BJ (cell line): ENCODE measurements at regions of chr4 and their contacts with region 1.

Region 1: GRCh38 chr4:77203380-77204197 is 46.6 kb downstream of the CCNG2 start:
- DNase-seq: peak; percentile 18
- H3K4me3 ChIP-seq: no peak overlapping the region
- H3K27me3 ChIP-seq: peaks cover 4% of the 10 kb centered on the region
- CTCF ChIP-seq: peak; percentile 81

Region 2: DNA sequence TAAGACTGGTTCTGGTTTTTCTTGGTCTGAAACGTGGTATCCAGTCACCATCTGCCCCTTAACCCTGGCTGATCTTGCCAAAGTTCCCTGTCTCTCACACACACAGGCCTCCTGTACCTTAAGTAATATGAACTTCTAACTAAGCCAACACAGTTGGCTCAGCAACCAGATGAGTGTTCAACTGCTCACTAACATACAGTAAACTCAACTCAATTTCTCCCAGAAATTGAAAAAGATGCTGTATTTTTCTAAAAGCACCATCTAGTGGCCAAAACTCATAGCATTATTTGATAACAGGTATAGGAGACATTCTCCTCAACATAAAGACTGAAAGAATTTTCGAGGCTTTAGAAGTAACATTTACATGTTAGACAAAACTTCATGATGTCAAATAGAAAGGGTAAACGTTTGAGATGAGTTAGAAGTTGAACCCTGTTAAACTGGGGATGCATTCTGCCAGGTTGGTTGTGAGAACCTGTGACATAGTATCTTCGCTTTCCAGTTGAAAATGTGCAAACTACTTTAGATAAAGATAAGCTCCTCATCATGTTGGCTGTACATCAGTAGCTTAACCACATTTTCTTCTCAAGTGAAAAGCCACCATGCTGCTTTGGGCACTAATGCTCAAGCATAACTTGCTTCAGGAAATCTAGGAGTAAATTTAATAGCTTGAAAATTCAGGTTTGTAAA is 159.0 kb before region 1 on chr4:
- CTCF ChIA-PET with region 1: interaction called, 17 read pairs
- POLR2A ChIA-PET with region 1: no interaction called
- DNase-seq: no peak
- H3K4me3 ChIP-seq: no peak overlapping the region
- H3K27me3 ChIP-seq: no peaks in the 10 kb centered on the region
- CTCF ChIP-seq: peak; percentile 62

Region 3: GRCh38 chr4:77052352-77052751 is 151.2 kb before region 1 on chr4:
- CTCF ChIA-PET with region 1: interaction called, 11 read pairs
- POLR2A ChIA-PET with region 1: interaction called, 11 read pairs
- DNase-seq: peak; percentile 42
- H3K4me3 ChIP-seq: no peak overlapping the region
- H3K27me3 ChIP-seq: no peaks in the 10 kb centered on the region
- CTCF ChIP-seq: peak; percentile 58

Region 4: GRCh38 chr4:77095101-77095821 is 108.3 kb before region 1 on chr4:
- CTCF ChIA-PET with region 1: interaction called, 120 read pairs
- POLR2A ChIA-PET with region 1: no interaction called
- DNase-seq: no peak
- H3K4me3 ChIP-seq: no peak overlapping the region
- H3K27me3 ChIP-seq: no peaks in the 10 kb centered on the region
- CTCF ChIP-seq: peak; percentile 95

Region 5: DNA sequence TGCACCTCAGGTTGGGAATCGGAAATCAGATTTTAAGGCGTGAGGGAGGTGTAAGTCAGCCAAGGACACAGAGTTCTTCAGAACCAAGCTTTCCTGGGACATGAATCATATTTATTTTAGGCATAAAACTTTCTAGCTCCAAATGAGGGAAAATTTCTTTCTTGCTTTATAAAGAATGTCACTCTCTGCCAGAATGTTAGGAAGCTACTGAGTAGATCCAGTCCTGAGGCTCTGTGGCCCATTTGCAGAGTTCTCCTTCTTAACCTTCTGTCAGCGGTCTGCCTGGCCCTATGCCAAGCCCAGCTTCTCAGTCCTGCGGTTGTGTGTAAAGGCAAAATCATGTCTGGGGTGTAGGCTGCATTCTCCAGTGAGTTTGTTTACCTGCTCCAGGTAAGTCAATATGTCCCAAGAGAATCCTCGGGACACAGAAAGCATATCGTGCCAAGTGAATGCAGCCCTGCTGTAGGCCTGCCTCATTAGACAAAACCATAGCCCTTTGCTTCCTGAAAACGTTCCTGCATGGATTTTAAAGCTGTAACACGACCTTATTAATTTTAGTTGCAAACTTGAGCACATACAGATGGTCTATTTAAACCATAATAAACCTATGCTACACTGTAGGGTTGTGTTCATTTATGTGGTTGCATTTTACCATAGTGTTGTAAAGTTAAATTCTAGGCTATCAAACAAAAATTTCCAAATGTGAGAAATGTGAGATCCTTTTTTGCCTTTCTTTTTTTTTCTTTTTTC is 98.6 kb before region 1 on chr4:
- CTCF ChIA-PET with region 1: interaction called, 120 read pairs
- POLR2A ChIA-PET with region 1: no interaction called
- DNase-seq: no peak
- H3K4me3 ChIP-seq: no peak overlapping the region
- H3K27me3 ChIP-seq: no peaks in the 10 kb centered on the region
- CTCF ChIP-seq: no peak

Region 6: DNA sequence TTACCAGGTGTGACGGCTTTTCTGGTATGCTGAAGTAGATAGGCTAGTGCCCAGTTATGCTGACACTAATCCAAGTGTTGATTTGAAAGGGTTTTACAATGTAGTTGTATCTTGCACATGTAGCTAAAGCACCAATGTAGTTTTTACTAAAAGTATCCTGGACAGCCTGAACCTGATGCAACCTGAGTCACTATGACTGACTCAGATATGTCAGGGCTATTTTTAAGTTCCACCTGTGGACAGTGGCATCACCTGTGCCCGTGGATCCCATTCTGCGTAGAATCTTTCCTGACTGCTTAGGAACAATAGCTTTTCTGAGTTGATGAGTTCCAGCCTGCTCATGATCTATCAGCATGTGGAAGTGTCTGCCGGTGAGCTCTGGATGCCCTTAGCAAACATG is 11.5 kb after region 1 on chr4:
- CTCF ChIA-PET with region 1: interaction called, 14 read pairs
- POLR2A ChIA-PET with region 1: no interaction called
- DNase-seq: no peak
- H3K4me3 ChIP-seq: no peak overlapping the region
- H3K27me3 ChIP-seq: peaks cover 8% of the 10 kb centered on the region
- CTCF ChIP-seq: no peak

Region 7: DNA sequence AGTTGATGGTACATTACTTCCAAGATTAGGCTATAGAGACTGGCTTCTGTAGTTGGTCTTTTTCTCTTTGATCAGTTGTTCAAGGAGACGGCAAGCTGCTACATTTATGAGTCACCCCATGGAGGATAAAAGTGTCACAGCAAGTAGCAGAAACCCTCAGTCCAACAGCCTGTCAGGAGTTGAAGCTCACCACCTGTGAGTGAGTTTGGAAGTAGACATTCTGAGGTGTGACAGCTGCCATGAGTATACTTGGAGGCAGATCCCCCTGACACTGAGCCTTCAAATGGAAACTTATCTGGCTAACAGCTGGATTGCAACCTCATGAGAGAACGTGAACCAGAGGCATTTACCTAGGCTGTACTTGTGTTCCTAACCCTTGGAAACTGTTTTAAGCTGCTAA is 21.4 kb after region 1 on chr4:
- CTCF ChIA-PET with region 1: interaction called, 10 read pairs
- POLR2A ChIA-PET with region 1: no interaction called
- DNase-seq: no peak
- H3K4me3 ChIP-seq: no peak overlapping the region
- H3K27me3 ChIP-seq: peaks cover 6% of the 10 kb centered on the region
- CTCF ChIP-seq: no peak

Region 8: DNA sequence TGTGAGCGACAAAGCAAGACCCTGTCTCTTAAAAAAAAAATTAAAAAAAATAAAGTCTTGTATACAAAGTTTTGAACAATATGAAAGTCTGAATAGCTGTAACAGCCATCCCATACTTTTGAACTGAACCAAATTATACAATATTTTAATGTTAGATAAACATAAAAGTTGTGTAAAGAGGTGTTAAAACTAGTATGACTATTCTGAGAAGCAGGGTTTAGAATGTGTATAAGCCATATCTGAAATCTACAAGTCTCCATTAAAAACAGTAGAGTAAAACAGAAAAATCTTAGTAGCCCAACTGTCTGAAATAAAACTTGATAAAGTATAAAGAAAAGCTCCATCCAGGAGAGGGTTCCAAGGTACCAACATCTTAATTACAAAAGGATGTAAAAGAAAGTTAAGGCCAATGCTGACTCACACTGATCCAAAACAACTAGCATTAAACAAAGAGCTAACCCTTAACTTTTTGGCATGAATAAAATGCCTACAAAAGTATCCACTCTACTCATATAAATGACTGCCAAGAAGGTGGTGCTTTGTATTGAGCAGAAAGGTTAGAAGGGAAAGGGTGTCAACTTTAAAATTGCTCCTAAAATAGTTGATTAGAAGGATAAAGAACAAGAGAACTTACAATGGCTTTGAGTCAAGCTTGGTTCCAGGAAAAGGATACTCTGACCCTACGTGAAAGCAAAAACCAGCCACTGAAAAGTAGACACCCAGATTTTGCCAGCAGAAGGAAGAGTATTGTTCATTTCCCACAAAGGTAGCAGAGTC is 597.1 kb after region 1 on chr4:
- CTCF ChIA-PET with region 1: no interaction called
- POLR2A ChIA-PET with region 1: no interaction called
- DNase-seq: no peak
- H3K4me3 ChIP-seq: no peak overlapping the region
- H3K27me3 ChIP-seq: no peaks in the 10 kb centered on the region
- CTCF ChIP-seq: no peak